Endothelial cell of umbilical vein (primary cell): ENCODE measurements at regions of chr9 and their contacts with region 1.

Region 1: DNA sequence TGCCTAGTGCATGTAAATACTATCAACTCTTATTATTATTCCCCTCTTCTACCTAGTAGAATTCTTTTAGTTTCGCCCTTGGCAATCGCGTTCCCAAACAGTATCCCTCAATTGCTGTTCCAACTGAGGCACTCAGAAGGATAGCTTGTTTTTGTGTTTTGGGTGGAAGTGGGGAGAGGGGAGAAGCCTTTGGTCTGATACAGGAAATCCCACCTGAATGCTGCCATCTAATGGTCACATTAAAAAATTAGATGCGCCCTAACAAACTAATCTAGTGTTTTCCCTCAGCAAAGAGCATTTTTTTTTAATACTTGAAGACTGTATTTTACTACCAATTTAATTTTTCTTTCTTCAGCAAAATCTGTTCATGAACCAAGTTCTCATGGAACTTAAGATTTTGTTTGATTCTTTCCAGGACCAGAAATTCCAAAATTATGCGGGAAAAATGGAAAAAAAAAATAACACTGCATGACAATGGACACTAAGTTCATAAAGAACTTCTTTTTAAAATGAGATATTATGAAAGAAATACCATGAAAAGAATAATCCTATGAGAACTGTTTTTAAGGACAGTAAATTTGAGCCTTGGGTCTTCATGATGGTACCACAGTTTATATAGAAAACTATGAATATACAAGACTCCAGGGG is 22.2 kb upstream of the GLDC start:
- DNase-seq: peak; percentile 46
- H3K4me3 ChIP-seq: no peak overlapping the region
- H3K27ac ChIP-seq: no peak overlapping the region
- H3K4me1 ChIP-seq: peaks cover 3% of the 10 kb centered on the region
- H3K27me3 ChIP-seq: no peaks in the 10 kb centered on the region
- CTCF ChIP-seq: peak; percentile 28 to 45
- POLR2A ChIP-seq: no peak

Region 2: DNA sequence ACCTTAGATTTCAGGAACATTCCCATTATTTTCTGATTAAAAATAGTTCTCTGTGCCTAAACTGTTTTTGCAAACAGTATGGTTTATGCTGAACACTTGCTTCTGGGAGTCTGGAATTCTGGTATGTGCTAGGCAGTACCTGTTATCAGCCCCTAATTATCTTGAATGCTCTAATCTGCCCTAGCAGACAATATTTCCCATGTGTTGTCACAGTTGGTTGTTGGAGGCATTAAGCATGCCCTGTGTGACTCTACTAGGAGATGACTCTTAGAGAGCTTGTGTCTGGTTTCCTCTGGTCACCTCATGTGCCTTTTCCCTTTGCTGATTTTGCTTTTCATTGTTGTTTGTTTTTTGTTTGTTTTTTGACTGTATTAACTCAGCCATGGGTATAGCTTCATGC is 218.1 kb before region 1 on chr9:
- CTCF ChIA-PET with region 1: no interaction called
- POLR2A ChIA-PET with region 1: no interaction called
- dilution Hi-C with region 1: no loop called
- intact Hi-C with region 1: no loop called
- DNase-seq: peak; percentile 42
- H3K4me3 ChIP-seq: no peak overlapping the region
- H3K27ac ChIP-seq: peak overlapping the region; percentile 66
- H3K4me1 ChIP-seq: peaks cover 38% of the 10 kb centered on the region
- H3K27me3 ChIP-seq: no peaks in the 10 kb centered on the region
- CTCF ChIP-seq: no peak
- POLR2A ChIP-seq: no peak

Region 3: DNA sequence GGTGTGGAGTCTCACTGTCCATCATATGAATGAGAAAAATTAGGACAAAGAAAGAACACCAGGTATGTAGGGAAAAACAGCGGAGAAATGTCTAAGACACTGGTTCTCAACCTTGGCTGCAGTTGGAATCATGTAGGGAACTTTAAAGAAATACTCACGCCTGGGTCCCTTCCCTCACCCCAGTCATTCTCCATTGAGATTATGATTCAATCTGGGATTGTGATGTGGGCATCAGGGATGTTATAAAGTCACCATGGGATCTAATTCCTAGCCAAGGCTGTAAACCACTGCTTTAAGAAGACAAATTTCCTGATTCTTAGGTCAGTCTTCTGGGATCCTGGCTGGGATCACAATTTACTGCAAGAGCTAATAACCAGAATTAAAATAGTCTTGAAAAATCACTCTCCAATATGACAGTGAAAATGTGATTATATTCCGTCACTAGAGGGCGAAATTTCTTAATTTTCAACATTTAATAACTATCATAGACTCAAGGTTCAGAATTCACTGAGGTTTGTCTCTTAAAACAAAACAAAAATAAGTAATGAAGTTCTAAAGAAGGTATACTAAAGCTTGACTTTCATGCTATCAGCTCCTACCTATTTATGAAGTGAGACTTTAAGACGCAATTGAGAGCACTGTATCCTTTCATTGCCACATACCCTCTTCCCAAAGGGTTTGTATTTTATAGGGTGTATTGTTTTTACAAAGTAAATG is 82.7 kb before region 1 on chr9:
- CTCF ChIA-PET with region 1: interaction called, 29 read pairs
- POLR2A ChIA-PET with region 1: no interaction called
- dilution Hi-C with region 1: no loop called
- intact Hi-C with region 1: loop called (anchors 1 kb)
- DNase-seq: peak; percentile 58
- H3K4me3 ChIP-seq: no peak overlapping the region
- H3K27ac ChIP-seq: no peak overlapping the region
- H3K4me1 ChIP-seq: no peaks in the 10 kb centered on the region
- H3K27me3 ChIP-seq: peaks cover 0 to 2% of the 10 kb centered on the region in 2 experiments
- CTCF ChIP-seq: peak; percentile 16 to 23
- POLR2A ChIP-seq: no peak